ENCODE measurements at regions of chr4 and their contacts with region 1.

Region 1: GRCh38 chr4:184263910-184264732 is 46.4 kb upstream of the ENPP6 start:
- DNase-seq: peak; percentile 96
- H3K4me3 ChIP-seq: peak overlapping the region in 1 of 8 donors; percentile 43
- H3K27ac ChIP-seq: peak overlapping the region in 5 of 8 donors; percentile 20 to 71 (median 60)
- H3K4me1 ChIP-seq: peaks cover 3 to 57% (median 45%) of the 10 kb centered on the region in 6 donors
- H3K27me3 ChIP-seq: no peaks in the 10 kb centered on the region
- CTCF ChIP-seq: peak; percentile 54 to 95 (median 89)
- POLR2A ChIP-seq: no peak

Region 2: GRCh38 chr4:183940864-183941263 is 323.3 kb before region 1 on chr4:
- intact Hi-C with region 1: no loop called
- DNase-seq: no peak
- H3K4me3 ChIP-seq: no peak overlapping the region
- H3K27ac ChIP-seq: no peak overlapping the region
- H3K4me1 ChIP-seq: peaks cover 0 to 16% (median 8%) of the 10 kb centered on the region in 6 donors
- H3K27me3 ChIP-seq: no peaks in the 10 kb centered on the region
- CTCF ChIP-seq: no peak
- POLR2A ChIP-seq: no peak

Region 3: GRCh38 chr4:184193556-184194525 is 70.3 kb before region 1 on chr4:
- intact Hi-C with region 1: no loop called
- DNase-seq: no peak
- H3K4me3 ChIP-seq: no peak overlapping the region
- H3K27ac ChIP-seq: no peak overlapping the region
- H3K4me1 ChIP-seq: no peaks in the 10 kb centered on the region
- H3K27me3 ChIP-seq: no peaks in the 10 kb centered on the region
- CTCF ChIP-seq: no peak
- POLR2A ChIP-seq: no peak

Region 4: DNA sequence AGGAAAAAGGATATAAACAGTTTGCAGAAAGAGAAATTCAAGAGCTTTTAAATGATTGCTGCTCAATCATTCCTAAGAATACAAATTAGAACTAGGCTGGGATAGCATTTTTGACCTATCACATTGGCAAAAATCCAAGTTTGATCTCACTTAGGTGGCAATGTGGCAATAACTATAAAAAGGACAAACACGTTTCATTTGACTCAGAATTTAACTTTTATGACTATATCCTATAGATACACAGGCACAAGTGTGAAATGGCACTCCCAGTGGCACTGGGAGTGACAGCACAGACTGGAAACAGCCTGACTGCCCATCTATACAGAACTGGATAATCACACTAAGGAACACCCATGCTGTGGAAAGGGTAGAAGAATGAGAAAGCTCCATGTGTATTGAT is 458.7 kb after region 1 on chr4:
- intact Hi-C with region 1: loop called (anchors 10 kb)
- DNase-seq: no peak
- H3K4me3 ChIP-seq: no peak overlapping the region
- H3K27ac ChIP-seq: no peak overlapping the region
- H3K4me1 ChIP-seq: peaks cover 0 to 5% (median 0%) of the 10 kb centered on the region in 6 donors
- H3K27me3 ChIP-seq: no peaks in the 10 kb centered on the region
- CTCF ChIP-seq: no peak
- POLR2A ChIP-seq: no peak

Measured in spleen (tissue), 13 donors.